K562 (cell line): ENCODE measurements at regions of chr9 and their contacts with region 1.

Region 1: DNA sequence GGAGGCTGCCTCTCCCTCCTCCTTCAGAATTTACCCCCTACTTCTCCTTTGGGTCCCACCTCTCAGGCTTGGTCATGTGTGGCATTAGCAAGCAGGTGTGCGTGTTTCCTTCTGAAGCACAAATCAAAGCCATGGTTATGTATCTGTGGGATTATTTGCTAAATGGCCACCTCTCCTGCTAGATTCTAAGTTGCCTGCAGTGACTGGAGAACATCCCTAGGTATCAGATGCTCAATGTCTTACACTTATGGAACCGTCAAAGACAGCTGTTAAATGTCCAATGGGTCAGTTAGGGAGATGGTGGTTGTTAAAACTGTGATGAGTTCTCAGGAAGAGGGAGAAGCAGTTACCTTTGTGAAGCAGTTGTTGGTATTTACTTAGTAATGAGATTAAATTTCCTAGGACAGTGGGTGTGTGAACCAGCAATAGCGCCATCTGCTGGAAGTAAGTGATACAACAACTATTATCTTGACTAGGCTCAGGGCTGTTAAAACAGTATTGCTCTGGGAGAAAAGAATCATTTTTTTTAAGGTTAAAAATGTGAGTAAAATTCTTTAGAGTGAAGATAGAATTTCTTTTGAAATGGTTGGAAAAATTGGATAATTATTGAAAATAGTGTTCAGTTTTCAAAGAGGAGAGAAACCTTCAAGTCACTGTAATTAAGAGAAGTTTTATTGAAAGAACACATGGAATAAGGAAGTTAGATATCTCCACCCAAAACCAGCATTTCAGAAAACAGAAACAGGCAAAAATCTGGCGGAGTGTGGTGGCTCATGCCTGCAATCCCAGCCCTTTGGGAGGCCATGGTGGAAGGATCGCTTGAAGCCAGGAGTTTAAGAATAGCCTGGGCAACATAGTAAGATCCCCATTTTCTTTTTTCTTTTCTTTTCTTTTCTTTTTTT is 71.3 kb downstream of the TMC1 start:
- DNase-seq: peak; percentile 47 to 61 (median 54)
- ATAC-seq: peak; percentile 85
- H3K4me3 ChIP-seq: no peak overlapping the region
- H3K27ac ChIP-seq: no peak overlapping the region
- H3K4me1 ChIP-seq: peaks cover 0 to 7% of the 10 kb centered on the region in 2 experiments; a peak in 3 of 5 replicates
- H3K27me3 ChIP-seq: no peaks in the 10 kb centered on the region
- CTCF ChIP-seq: peak; percentile 39 to 69 (median 66); a peak in 5 of 6 replicates
- EP300 ChIP-seq: no peak
- POLR2A ChIP-seq: no peak
- RAD21 ChIP-seq: peak; percentile 75 to 79

Region 2: GRCh38 chr9:72280913-72281500 is 311.7 kb before region 1 on chr9:
- CTCF ChIA-PET with region 1: interaction called, 7 read pairs
- POLR2A ChIA-PET with region 1: no interaction called
- in situ Hi-C with region 1: loop called (anchors 5 kb)
- intact Hi-C with region 1: loop called (anchors 1 kb)
- DNase-seq: peak; percentile 54 to 67 (median 59)
- ATAC-seq: peak; percentile 91
- H3K4me3 ChIP-seq: no peak overlapping the region
- H3K27ac ChIP-seq: no peak overlapping the region
- H3K4me1 ChIP-seq: no peaks in the 10 kb centered on the region
- H3K27me3 ChIP-seq: no peaks in the 10 kb centered on the region; a peak in 1 of 5 replicates
- CTCF ChIP-seq: peak; percentile 75 to 86 (median 79)
- EP300 ChIP-seq: no peak
- POLR2A ChIP-seq: no peak
- RAD21 ChIP-seq: peak; percentile 83 to 88

Region 3: DNA sequence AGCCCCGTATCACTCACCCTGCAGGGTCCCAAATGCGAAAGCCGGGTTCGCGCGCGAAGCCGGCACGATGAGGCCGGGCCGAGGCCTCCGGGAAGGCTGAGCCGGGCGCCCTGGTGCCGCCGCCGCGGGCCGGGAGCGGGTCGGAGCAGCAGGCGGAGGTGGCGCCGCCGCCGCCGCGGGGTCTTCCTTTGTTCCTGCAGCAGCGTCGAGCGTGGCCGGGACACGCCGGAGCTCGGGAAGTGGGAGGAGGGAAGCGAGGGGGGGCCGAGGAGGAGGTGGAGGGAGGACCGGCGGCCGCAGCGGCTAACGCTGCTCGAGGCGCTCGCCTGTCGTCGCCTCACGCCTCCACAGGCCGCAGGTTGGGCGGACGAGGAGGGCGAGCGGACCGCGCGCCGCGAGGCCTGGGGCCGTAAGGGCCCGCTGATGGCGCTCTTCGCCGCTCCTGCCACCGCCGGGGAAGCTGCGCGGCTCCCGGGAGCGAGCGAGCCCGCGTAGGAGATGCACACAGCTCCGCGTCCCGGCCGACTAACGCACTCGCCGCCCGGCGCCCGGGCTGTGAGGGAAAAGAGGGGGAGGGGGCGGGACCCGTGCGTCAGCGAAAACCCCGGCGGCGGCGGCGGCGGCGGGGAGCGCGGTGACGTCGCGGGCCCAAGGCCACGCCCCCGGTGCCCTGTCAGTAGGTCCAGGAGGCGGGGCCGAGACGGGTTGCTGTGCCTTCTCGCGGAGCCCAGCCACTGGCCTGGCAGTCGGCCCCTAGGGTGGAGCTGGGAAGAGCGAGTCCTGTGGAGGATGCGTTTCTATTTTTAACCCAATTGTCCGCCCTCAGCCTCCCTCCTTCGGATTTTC is 227.9 kb before region 1 on chr9 and contains the start of gene ZFAND5:
- CTCF ChIA-PET with region 1: no interaction called
- POLR2A ChIA-PET with region 1: interaction called, 8 read pairs
- in situ Hi-C with region 1: no loop called
- intact Hi-C with region 1: loop called (anchors 5 kb)
- DNase-seq: peak; percentile 85 to 92 (median 90)
- ATAC-seq: peak; percentile 84
- H3K4me3 ChIP-seq: peak within 1 kb of the TSS; percentile 81
- H3K27ac ChIP-seq: peak within 1 kb of the TSS; percentile 92
- H3K4me1 ChIP-seq: peaks cover 3 to 6% of the 10 kb centered on the region in 2 experiments; a peak in 4 of 5 replicates
- H3K27me3 ChIP-seq: no peaks in the 10 kb centered on the region
- CTCF ChIP-seq: peak in 1 of 3 experiments; percentile 21; a peak in 1 of 6 replicates
- EP300 ChIP-seq: no peak
- POLR2A ChIP-seq: peak; percentile 94
- RAD21 ChIP-seq: peak in 1 of 2 experiments; percentile 29; a peak in 1 of 4 replicates
- polyA plus RNA-seq, gene ZFAND5: 12.7 TPM

Region 4: DNA sequence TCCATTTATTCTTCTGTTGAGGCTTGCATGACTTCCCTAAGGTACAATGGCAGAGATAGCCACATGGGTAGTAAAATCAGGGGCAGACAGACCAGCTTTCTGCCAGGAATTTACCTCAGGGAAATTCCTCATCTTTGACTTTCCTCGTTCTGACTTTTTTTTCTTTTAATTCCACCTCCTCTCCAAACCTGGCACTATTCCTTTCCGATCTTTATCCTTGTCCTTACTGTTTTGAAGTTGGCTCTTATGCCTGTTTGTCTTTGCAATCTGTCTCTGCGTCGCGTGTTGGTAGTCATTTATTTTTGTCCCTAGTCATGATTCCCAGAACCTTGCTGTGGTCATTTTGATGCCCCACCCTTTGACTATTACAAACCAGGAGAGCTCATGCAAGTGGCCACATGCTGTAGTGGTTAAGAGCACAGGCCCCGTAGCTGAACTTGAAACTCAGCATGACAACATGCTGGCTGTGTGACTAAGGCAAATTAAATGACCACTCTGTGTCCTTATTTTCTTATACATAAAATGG is 52.3 kb before region 1 on chr9:
- CTCF ChIA-PET with region 1: no interaction called
- POLR2A ChIA-PET with region 1: no interaction called
- in situ Hi-C with region 1: no loop called
- intact Hi-C with region 1: loop called (anchors 5 kb)
- DNase-seq: peak; percentile 32 to 78 (median 54)
- ATAC-seq: peak; percentile 93
- H3K4me3 ChIP-seq: no peak overlapping the region
- H3K27ac ChIP-seq: peak overlapping the region; percentile 81
- H3K4me1 ChIP-seq: peaks cover 3 to 19% of the 10 kb centered on the region in 2 experiments; a peak in 3 of 5 replicates
- H3K27me3 ChIP-seq: no peaks in the 10 kb centered on the region
- CTCF ChIP-seq: no peak
- EP300 ChIP-seq: no peak; the same call in 1 of the 2 replicates
- POLR2A ChIP-seq: no peak
- RAD21 ChIP-seq: no peak

Region 5: GRCh38 chr9:72612445-72612844 is 19.7 kb after region 1 on chr9:
- CTCF ChIA-PET with region 1: no interaction called
- POLR2A ChIA-PET with region 1: no interaction called
- in situ Hi-C with region 1: no loop called
- intact Hi-C with region 1: no loop called
- DNase-seq: no peak
- ATAC-seq: no peak
- H3K4me3 ChIP-seq: no peak overlapping the region
- H3K27ac ChIP-seq: no peak overlapping the region
- H3K4me1 ChIP-seq: no peaks in the 10 kb centered on the region
- H3K27me3 ChIP-seq: no peaks in the 10 kb centered on the region; a peak in 3 of 5 replicates
- CTCF ChIP-seq: no peak
- EP300 ChIP-seq: no peak
- POLR2A ChIP-seq: no peak
- RAD21 ChIP-seq: no peak